ENCODE measurements at regions of chr4 and their contacts with region 1.

Region 1: DNA sequence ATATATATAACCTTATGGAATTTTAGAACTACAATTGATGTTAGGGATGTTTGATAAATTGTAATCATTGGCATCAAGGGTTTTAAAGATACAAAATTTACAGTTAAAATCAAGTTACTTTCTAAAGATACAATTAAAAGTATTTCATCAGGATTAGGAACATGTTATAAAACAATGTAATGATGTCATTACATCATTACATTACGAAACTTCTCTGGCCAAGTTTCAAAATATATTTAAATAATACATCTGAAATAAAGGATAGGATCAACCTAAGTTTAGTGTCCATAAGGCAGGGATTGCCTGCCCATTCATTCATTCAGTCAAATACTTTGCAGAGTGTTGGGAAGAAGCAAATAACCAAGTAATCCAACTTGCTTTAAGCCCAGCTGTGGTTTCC is 75.1 kb downstream of the TENM3 start:
- DNase-seq: no peak
- H3K4me3 ChIP-seq: no peak overlapping the region
- H3K4me3 Mint-ChIP-seq: no peak overlapping the region
- H3K27ac Mint-ChIP-seq: no peak overlapping the region
- H3K4me1 ChIP-seq: peaks cover 19% of the 10 kb centered on the region
- H3K4me1 Mint-ChIP-seq: peaks cover 8% of the 10 kb centered on the region
- H3K27me3 ChIP-seq: no peaks in the 10 kb centered on the region
- H3K27me3 Mint-ChIP-seq: no peaks in the 10 kb centered on the region
- CTCF ChIP-seq: no peak

Region 2: DNA sequence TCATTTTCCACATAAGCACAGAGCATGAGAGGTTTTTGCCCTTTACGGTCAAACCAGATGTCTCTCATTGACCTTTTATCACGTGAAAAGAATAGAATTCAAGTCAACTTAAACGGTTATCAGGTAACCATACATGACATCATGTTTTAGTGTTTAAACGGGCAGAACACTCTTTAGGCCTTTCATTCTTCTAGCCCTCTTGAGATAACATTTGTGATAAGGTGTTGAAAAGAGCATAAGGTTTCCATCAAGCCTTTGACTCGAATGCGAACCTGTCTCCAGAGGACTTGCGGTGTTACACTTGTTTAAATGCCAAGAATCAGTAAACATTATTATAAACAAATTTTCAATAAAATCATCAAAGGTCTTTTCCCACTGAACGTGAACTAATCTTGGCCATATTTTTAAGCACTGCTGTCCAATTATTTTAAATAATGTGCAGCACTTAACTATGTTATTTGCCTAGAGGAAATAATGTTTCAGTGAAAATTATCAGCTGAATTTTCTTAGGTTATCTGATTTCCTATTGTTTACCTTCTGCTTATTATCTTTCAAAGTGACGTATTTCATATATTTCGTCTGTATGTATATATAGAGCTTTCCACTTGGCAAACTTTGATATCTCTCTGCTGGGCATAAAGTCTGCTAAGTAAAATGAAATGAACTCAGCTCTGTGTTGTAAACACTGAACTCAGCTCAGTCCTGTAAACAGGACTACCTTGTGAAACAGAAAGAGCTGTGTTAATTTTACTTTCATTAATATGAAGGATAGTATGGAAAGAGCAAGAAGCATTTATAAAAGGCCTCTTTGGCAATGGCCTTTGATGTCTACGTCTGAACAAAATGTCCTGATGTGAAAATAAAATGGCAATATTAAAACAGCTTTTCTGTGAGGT is 41.8 kb before region 1 on chr4:
- CTCF ChIA-PET with region 1: no interaction called
- POLR2A ChIA-PET with region 1: no interaction called
- intact Hi-C with region 1: loop called (anchors 1 kb)
- DNase-seq: peak in 1 of 2 experiments; percentile 41
- H3K4me3 ChIP-seq: no peak overlapping the region
- H3K4me3 Mint-ChIP-seq: peak overlapping the region; percentile 22
- H3K27ac Mint-ChIP-seq: peak overlapping the region; percentile 26
- H3K4me1 ChIP-seq: peaks cover 65% of the 10 kb centered on the region
- H3K4me1 Mint-ChIP-seq: peaks cover 28% of the 10 kb centered on the region
- H3K27me3 ChIP-seq: no peaks in the 10 kb centered on the region
- H3K27me3 Mint-ChIP-seq: no peaks in the 10 kb centered on the region
- CTCF ChIP-seq: no peak

Measured in Caco-2 (cell line).